PC-3 (cell line): ENCODE measurements at regions of chr2 and their contacts with region 1.

Region 1: DNA sequence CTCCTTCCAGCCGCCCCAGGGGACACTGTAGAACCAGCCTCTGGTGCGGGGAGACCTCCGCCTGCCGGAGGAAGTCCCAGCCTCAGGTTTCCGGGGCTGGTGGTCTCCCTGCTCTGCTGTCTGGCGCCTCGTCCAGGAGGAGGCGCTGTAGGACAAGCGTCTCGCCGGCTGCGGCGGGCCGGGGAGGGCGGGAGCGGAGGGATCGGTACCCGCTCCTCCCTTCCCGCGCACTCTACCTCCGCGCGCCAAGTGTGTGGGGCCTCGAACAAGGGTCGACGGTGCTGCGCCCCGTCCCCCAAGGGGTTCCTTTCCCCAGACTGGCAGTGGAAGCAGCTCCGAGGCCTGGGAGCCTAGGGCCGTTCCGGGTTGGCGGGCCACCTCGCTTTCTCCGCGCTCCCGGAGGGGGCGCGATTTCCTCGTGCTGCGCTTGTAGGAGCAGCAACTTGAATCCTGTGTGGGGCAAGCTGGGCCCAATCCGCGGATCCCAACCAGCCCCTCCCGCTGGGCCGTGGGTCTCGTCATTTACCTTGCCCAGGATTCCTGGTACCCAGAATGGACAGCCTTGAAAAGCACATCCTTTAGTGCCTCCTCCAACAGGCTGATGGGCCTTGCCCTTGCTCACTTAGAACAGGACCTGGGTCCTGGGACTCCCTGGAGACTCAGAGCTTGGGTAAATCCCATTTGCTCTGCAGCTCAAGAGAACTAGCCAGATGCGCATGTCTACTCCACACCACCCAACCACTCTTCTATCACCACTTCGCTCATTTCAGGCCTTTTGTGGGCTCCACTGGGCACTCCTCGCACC is 10.6 kb upstream of the HOXD4 start:
- DNase-seq: peak; percentile 85
- ATAC-seq: peak; percentile 68
- H3K4me3 ChIP-seq: peak overlapping the region; percentile 75
- H3K27ac ChIP-seq: no peak overlapping the region
- H3K4me1 ChIP-seq: peaks cover 9% of the 10 kb centered on the region
- H3K27me3 ChIP-seq: no peaks in the 10 kb centered on the region
- CTCF ChIP-seq: peak; percentile 94

Region 2: GRCh38 chr2:175965773-175966172 is 174.9 kb before region 1 on chr2:
- CTCF ChIA-PET with region 1: no interaction called
- POLR2A ChIA-PET with region 1: no interaction called
- intact Hi-C with region 1: no loop called
- DNase-seq: no peak
- ATAC-seq: no peak
- H3K4me3 ChIP-seq: no peak overlapping the region
- H3K27ac ChIP-seq: no peak overlapping the region
- H3K4me1 ChIP-seq: 0 out of 2 replicates have a peak, but pooled peaks cover 4% of the 10 kb centered on the region
- H3K27me3 ChIP-seq: no peaks in the 10 kb centered on the region
- CTCF ChIP-seq: no peak

Region 3: GRCh38 chr2:176269319-176270099 is 128.8 kb after region 1 on chr2 and contains the start of gene MTX2:
- CTCF ChIA-PET with region 1: no interaction called
- POLR2A ChIA-PET with region 1: no interaction called
- intact Hi-C with region 1: loop called (anchors 2 kb)
- DNase-seq: peak; percentile 76
- ATAC-seq: peak; percentile 94
- H3K4me3 ChIP-seq: peak within 1 kb of the TSS; percentile 94
- H3K27ac ChIP-seq: peak within 1 kb of the TSS; percentile 66
- H3K4me1 ChIP-seq: peaks cover 6% of the 10 kb centered on the region; the same call in 1 of the 2 replicates
- H3K27me3 ChIP-seq: no peaks in the 10 kb centered on the region
- CTCF ChIP-seq: no peak
- total RNA-seq, gene MTX2: 33.3 and 54.5 TPM in 2 replicates

Region 4: GRCh38 chr2:176445956-176446355 is 305.2 kb after region 1 on chr2:
- CTCF ChIA-PET with region 1: interaction called, 9 read pairs
- POLR2A ChIA-PET with region 1: interaction called, 13 read pairs
- intact Hi-C with region 1: loop called (anchors 2 kb)
- DNase-seq: peak; percentile 85
- ATAC-seq: peak; percentile 86
- H3K4me3 ChIP-seq: no peak overlapping the region
- H3K27ac ChIP-seq: peak overlapping the region; percentile 87
- H3K4me1 ChIP-seq: peaks cover 30% of the 10 kb centered on the region
- H3K27me3 ChIP-seq: no peaks in the 10 kb centered on the region
- CTCF ChIP-seq: peak; percentile 21; the same call in 1 of the 2 replicates

Region 5: DNA sequence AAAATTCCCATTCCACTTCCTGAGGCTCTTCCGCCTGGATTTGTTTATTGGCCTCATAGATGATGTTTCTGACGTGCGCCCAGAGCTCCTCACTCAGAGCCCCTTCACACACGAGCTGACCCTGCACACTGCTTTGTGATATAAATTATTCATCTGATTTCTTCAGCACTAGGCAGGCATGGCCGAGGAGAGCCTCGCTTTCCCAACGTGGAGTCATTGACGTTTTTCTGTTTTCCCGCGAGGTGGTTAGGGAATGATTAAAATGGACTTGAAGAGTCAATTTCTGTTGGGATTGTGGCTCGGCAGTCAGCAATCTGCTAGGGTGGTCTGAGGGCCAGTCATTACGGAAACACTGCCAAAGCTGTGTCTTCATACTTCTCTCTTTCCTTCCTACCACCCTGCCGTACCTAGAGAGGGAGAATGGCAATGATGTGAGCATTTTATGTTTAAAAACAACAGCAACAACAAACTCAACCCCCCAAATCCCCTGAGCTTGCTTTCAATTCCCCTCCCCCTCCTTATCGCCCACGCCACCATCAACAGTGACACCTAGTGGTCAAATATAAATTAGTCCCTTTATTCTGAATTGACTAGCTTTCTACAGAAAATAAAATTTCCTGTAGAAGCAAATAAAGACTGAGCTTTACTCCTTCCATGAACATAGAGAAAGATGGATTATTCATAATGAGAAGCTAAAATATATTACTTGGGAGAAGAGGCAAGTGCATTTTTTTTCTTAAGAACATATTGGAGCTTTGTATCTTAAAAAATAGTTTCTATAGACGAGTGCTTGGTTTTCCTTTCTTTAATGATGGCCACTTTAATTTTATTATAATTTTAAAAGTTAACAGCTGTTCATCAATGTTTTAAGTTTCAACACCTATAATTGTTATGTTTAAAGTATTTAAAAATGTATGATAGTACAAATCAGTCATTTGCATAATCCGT is 413.7 kb after region 1 on chr2:
- CTCF ChIA-PET with region 1: interaction called, 19 read pairs
- POLR2A ChIA-PET with region 1: no interaction called
- intact Hi-C with region 1: loop called (anchors 1 kb)
- DNase-seq: peak; percentile 85
- ATAC-seq: peak; percentile 52
- H3K4me3 ChIP-seq: peak overlapping the region; percentile 72
- H3K27ac ChIP-seq: peak overlapping the region; percentile 54
- H3K4me1 ChIP-seq: peaks cover 32% of the 10 kb centered on the region
- H3K27me3 ChIP-seq: no peaks in the 10 kb centered on the region
- CTCF ChIP-seq: peak; percentile 89

Region 6: GRCh38 chr2:176777262-176777661 is 636.5 kb after region 1 on chr2:
- CTCF ChIA-PET with region 1: interaction called, 12 read pairs
- POLR2A ChIA-PET with region 1: no interaction called
- intact Hi-C with region 1: no loop called
- DNase-seq: no peak
- ATAC-seq: no peak
- H3K4me3 ChIP-seq: no peak overlapping the region
- H3K27ac ChIP-seq: no peak overlapping the region
- H3K4me1 ChIP-seq: no peaks in the 10 kb centered on the region
- H3K27me3 ChIP-seq: peaks cover 27% of the 10 kb centered on the region
- CTCF ChIP-seq: no peak